ENCODE measurements at regions of chr17 and their contacts with region 1.

Region 1: DNA sequence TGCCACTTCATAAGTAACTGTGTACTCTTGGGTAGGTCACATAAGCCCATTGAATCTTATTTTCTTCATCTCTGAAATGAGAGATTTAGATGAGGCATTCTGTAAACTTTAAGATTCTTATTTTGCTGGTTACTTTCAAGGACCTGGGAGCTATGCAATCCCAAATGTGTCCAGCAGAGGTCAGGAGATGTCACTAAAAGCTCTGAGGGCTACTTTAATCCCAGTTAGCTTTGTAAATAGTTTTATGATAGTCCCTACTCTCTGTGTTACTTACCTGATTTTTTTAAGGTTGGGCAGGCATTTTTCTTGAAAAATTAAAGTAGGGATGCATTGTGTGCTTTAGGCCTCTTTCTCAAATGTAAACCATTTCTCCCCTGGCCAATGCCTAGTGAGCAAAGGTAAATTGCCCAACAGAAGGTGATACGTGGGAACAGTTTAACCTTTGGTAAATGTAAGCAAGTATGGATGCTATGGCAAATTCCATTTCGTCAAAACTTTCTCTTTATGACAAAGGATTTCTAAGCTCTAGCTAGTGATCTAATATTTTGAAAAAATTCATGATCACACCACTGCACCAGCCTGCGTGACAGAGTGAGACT is 57.1 kb upstream of the WSB1 start:
- DNase-seq: peak; percentile 86
- H3K4me3 ChIP-seq: no peak overlapping the region
- H3K27ac ChIP-seq: no peak overlapping the region
- H3K4me1 ChIP-seq: no peaks in the 10 kb centered on the region
- H3K27me3 ChIP-seq: no peaks in the 10 kb centered on the region
- CTCF ChIP-seq: peak; percentile 71 to 73
- POLR2A ChIP-seq: no peak

Region 2: GRCh38 chr17:27206447-27206846 is 30.4 kb before region 1 on chr17:
- CTCF ChIA-PET with region 1: interaction called, 14 read pairs
- POLR2A ChIA-PET with region 1: no interaction called
- dilution Hi-C with region 1: no loop called
- intact Hi-C with region 1: no loop called
- DNase-seq: no peak
- H3K4me3 ChIP-seq: no peak overlapping the region
- H3K27ac ChIP-seq: no peak overlapping the region
- H3K4me1 ChIP-seq: peaks cover 9% of the 10 kb centered on the region
- H3K27me3 ChIP-seq: no peaks in the 10 kb centered on the region
- CTCF ChIP-seq: peak in 1 of 2 donors; percentile 7
- POLR2A ChIP-seq: no peak

Region 3: GRCh38 chr17:27293898-27294688 is 57.3 kb after region 1 on chr17 and contains the start of gene WSB1:
- CTCF ChIA-PET with region 1: interaction called, 109 read pairs
- POLR2A ChIA-PET with region 1: interaction called, 12 read pairs
- dilution Hi-C with region 1: no loop called
- intact Hi-C with region 1: no loop called
- DNase-seq: peak; percentile 90
- H3K4me3 ChIP-seq: peak within 1 kb of the TSS; percentile 45 to 96 (median 86)
- H3K27ac ChIP-seq: peak within 1 kb of the TSS; percentile 94
- H3K4me1 ChIP-seq: peaks cover 14% of the 10 kb centered on the region
- H3K27me3 ChIP-seq: no peaks in the 10 kb centered on the region
- CTCF ChIP-seq: no peak
- POLR2A ChIP-seq: peak; percentile 99
- total RNA-seq, gene WSB1: 334 and 471 TPM in 2 replicates

Region 4: DNA sequence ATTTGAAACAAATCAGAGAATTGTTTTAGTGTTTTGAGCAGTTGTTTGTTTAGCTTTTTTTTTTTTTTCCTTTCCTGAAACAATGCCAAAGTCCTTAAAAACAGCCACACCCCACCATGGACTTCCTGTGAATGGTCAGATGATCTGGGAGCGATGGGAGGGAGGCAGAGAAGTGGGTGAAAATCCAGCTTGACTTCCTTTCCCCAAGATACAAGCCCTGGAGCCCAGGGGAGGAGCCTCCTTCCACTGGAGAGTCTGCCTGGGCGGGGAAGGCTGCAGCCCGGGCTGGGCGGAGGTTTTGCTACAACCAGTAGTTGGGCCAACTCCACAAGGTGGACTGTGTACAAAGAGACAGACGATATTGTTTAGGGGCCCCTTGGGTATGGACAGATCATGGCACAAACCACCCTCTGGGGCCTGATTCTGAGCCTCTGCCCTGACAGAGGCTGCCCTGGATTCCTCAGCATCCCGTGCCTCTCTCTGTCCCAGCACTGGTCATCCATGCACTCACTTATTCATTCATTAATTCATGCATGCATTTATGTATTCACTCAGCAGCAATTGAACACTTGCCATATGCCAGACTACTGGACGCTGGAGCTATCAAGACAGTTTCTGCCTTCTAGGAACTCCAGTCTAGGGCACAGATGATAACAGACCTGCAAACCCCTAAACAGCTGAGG is 86.8 kb after region 1 on chr17:
- CTCF ChIA-PET with region 1: interaction called, 35 read pairs
- POLR2A ChIA-PET with region 1: no interaction called
- dilution Hi-C with region 1: no loop called
- intact Hi-C with region 1: no loop called
- DNase-seq: peak; percentile 77
- H3K4me3 ChIP-seq: no peak overlapping the region
- H3K27ac ChIP-seq: no peak overlapping the region
- H3K4me1 ChIP-seq: peaks cover 12% of the 10 kb centered on the region
- H3K27me3 ChIP-seq: no peaks in the 10 kb centered on the region
- CTCF ChIP-seq: no peak
- POLR2A ChIP-seq: peak; percentile 68

Region 5: GRCh38 chr17:27370776-27371175 is 134.0 kb after region 1 on chr17:
- CTCF ChIA-PET with region 1: no interaction called
- POLR2A ChIA-PET with region 1: no interaction called
- dilution Hi-C with region 1: no loop called
- intact Hi-C with region 1: no loop called
- DNase-seq: no peak
- H3K4me3 ChIP-seq: no peak overlapping the region
- H3K27ac ChIP-seq: no peak overlapping the region
- H3K4me1 ChIP-seq: no peaks in the 10 kb centered on the region
- H3K27me3 ChIP-seq: no peaks in the 10 kb centered on the region
- CTCF ChIP-seq: no peak
- POLR2A ChIP-seq: no peak

Region 6: DNA sequence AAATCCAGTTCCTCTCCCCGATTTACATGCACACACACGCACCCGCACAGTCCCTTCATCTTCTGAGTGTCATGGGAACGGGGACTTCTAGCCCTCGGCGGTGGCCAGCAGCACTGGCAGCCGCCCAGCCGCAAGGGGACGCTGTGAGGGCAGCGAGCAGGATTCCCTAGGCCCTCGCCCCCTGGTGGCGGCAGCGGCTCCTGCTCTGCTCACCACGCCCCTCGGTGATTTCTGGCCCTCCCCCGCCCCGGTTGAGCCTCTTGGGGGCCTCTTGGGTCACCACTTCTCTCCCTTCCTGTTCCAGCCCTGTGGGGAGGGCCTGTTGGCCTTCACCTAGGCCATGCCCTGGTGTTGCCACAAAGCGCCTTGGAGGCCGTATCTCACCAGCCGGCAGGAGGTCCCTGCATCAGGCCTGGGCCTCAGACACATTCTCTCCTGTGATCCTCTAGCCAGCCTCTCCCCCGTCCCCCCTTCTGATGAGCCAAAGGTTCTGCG is 144.2 kb after region 1 on chr17:
- CTCF ChIA-PET with region 1: interaction called, 8 read pairs
- POLR2A ChIA-PET with region 1: no interaction called
- dilution Hi-C with region 1: no loop called
- intact Hi-C with region 1: loop called (anchors 2 kb)
- DNase-seq: peak; percentile 51
- H3K4me3 ChIP-seq: no peak overlapping the region
- H3K27ac ChIP-seq: peak overlapping the region; percentile 77
- H3K4me1 ChIP-seq: peaks cover 45% of the 10 kb centered on the region
- H3K27me3 ChIP-seq: no peaks in the 10 kb centered on the region
- CTCF ChIP-seq: peak; percentile 94 to 95
- POLR2A ChIP-seq: no peak

Region 7: DNA sequence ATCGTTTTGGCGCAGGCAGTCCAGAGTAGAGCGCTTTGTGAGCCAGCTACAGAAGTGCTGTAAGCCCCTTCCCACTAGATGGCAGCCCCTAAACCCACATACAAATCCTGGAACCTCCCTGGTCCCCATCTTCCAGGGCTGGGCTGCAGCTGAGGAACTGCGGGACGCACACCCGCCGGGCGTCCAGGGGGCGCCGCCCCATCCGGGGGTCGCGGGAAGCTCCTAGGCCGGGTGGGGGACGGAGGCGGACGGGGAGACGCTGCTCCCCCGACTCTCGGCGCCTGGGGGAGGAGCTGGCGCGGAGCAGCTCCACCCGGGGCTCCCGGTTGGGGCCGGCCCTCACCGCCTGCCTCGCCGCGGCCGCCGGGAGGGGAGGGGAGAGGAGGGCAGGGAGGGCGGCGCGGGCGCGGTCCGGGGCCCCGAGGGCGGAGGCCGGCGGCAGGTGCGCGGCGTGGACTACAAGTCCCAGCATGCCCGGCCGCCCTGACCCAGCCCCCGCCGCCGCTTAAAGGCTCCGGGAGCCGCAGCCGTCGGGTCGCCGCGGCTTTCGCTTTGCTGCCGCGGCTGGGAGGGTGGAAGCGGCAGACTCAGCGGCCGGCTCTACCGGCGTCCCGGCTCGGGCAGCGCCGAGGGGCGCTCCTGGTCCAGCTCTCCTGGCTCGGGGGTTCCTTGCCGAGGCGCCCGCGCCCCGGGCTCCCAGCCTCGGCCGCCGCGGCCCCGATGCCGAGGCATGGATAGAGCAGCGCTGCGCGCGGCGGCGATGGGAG is 219.3 kb after region 1 on chr17 and contains the start of gene KSR1:
- CTCF ChIA-PET with region 1: interaction called, 16 read pairs
- POLR2A ChIA-PET with region 1: no interaction called
- dilution Hi-C with region 1: no loop called
- intact Hi-C with region 1: no loop called
- DNase-seq: peak; percentile 78
- H3K4me3 ChIP-seq: peak within 1 kb of the TSS; percentile 24 to 85 (median 62)
- H3K27ac ChIP-seq: peak within 1 kb of the TSS; percentile 35
- H3K4me1 ChIP-seq: peaks cover 18% of the 10 kb centered on the region
- H3K27me3 ChIP-seq: no peaks in the 10 kb centered on the region
- CTCF ChIP-seq: peak; percentile 39 to 74
- POLR2A ChIP-seq: peak; percentile 71
- total RNA-seq, gene KSR1: 55.6 and 80.2 TPM in 2 replicates